ENCODE measurements at regions of chr3 and their contacts with region 1.

Region 1: GRCh38 chr3:148991194-148992026 is at the start of gene GYG1:
- DNase-seq: peak; percentile 56 to 78 (median 70)
- ATAC-seq: peak; percentile 91
- H3K4me3 ChIP-seq: peak within 1 kb of the TSS; percentile 77
- H3K4me3 Mint-ChIP-seq: peak within 1 kb of the TSS; percentile 70 to 91 (median 87)
- H3K27ac ChIP-seq: peak within 1 kb of the TSS; percentile 76
- H3K27ac Mint-ChIP-seq: peak within 1 kb of the TSS; percentile 41 to 87 (median 80)
- H3K4me1 ChIP-seq: peaks cover 8 to 16% of the 10 kb centered on the region in 2 donors
- H3K4me1 Mint-ChIP-seq: peaks cover 5 to 41% (median 28%) of the 10 kb centered on the region in 7 donors
- H3K27me3 ChIP-seq: no peaks in the 10 kb centered on the region
- H3K27me3 Mint-ChIP-seq: peaks cover 0 to 3% (median 0%) of the 10 kb centered on the region in 5 donors
- total RNA-seq, gene GYG1: 15.5 to 39.3 (median 16.2) TPM

Region 2: GRCh38 chr3:148930752-148931151 is 60.7 kb before region 1 on chr3:
- CTCF ChIA-PET with region 1: no interaction called
- POLR2A ChIA-PET with region 1: no interaction called
- intact Hi-C with region 1: no loop called
- DNase-seq: no peak
- ATAC-seq: no peak
- H3K4me3 ChIP-seq: no peak overlapping the region
- H3K4me3 Mint-ChIP-seq: no peak overlapping the region
- H3K27ac ChIP-seq: no peak overlapping the region
- H3K27ac Mint-ChIP-seq: no peak overlapping the region
- H3K4me1 ChIP-seq: no peaks in the 10 kb centered on the region
- H3K4me1 Mint-ChIP-seq: peaks cover 0 to 2% (median 0%) of the 10 kb centered on the region in 7 donors
- H3K27me3 ChIP-seq: no peaks in the 10 kb centered on the region
- H3K27me3 Mint-ChIP-seq: peaks cover 14 to 23% (median 19%) of the 10 kb centered on the region in 5 donors

Region 3: DNA sequence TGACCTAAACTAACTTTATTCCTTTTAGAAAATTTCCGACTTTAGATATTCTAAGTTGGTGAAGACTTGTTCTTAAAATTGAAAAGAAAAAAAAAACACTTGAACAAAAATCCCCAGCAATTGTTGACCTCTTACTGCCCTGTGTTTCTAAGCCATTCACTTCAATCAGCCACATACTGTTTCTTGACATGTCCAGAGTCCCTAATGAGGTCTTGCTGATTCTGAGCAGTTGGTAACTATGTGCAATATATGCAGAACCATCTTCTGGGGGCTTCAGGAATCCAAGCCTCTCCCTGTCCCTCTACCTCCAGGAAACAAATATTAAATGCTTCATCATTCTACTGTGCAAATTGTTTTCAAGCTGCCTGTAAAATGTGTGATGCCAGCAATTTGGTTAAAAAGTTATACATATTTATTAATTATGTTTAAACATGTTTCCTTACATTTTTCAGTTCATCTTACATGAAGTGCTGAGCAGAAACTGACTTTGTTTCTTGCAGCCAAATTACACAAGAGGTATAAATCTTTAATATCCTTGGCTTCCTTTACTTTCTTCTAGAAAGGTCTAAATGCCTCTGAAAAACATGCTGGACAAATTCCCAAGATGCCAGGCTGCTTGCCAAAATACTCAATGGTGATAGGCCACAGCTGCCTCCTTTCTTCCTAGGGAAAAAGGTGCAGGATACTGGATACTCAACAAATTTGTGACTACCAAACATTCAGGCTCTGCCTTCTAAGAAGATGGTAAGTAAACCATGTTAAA is 19.8 kb before region 1 on chr3:
- CTCF ChIA-PET with region 1: interaction called, 3 read pairs
- POLR2A ChIA-PET with region 1: no interaction called
- intact Hi-C with region 1: loop called in 1 of 2 experiments (anchors 1 kb)
- DNase-seq: no peak
- ATAC-seq: no peak
- H3K4me3 ChIP-seq: no peak overlapping the region
- H3K4me3 Mint-ChIP-seq: no peak overlapping the region
- H3K27ac ChIP-seq: no peak overlapping the region
- H3K27ac Mint-ChIP-seq: no peak overlapping the region
- H3K4me1 ChIP-seq: no peaks in the 10 kb centered on the region
- H3K4me1 Mint-ChIP-seq: peaks cover 0 to 4% (median 0%) of the 10 kb centered on the region in 7 donors
- H3K27me3 ChIP-seq: no peaks in the 10 kb centered on the region
- H3K27me3 Mint-ChIP-seq: peaks cover 0 to 8% (median 0%) of the 10 kb centered on the region in 5 donors

Region 4: GRCh38 chr3:149042789-149043386 is 51.5 kb after region 1 on chr3:
- CTCF ChIA-PET with region 1: no interaction called
- POLR2A ChIA-PET with region 1: no interaction called
- intact Hi-C with region 1: loop called in 1 of 2 experiments (anchors 5 kb)
- DNase-seq: no peak
- ATAC-seq: no peak
- H3K4me3 ChIP-seq: no peak overlapping the region
- H3K4me3 Mint-ChIP-seq: peak overlapping the region in 2 of 10 donors; percentile 15 to 54
- H3K27ac ChIP-seq: no peak overlapping the region
- H3K27ac Mint-ChIP-seq: peak overlapping the region in 6 of 9 donors; percentile 3 to 82 (median 50)
- H3K4me1 ChIP-seq: no peaks in the 10 kb centered on the region
- H3K4me1 Mint-ChIP-seq: peaks cover 3 to 25% (median 21%) of the 10 kb centered on the region in 7 donors
- H3K27me3 ChIP-seq: no peaks in the 10 kb centered on the region
- H3K27me3 Mint-ChIP-seq: no peaks in the 10 kb centered on the region

Region 5: GRCh38 chr3:149129326-149130205 is 138.2 kb after region 1 on chr3 and contains the start of gene HPS3:
- CTCF ChIA-PET with region 1: no interaction called
- POLR2A ChIA-PET with region 1: interaction called, 9 read pairs
- intact Hi-C with region 1: loop called (anchors 2 kb)
- DNase-seq: peak; percentile 62 to 87 (median 71)
- ATAC-seq: peak; percentile 94
- H3K4me3 ChIP-seq: peak within 1 kb of the TSS; percentile 96
- H3K4me3 Mint-ChIP-seq: peak within 1 kb of the TSS; percentile 92 to 99 (median 96)
- H3K27ac ChIP-seq: peak within 1 kb of the TSS; percentile 70
- H3K27ac Mint-ChIP-seq: peak within 1 kb of the TSS; percentile 84 to 96 (median 90)
- H3K4me1 ChIP-seq: peaks cover 25 to 27% of the 10 kb centered on the region in 2 donors
- H3K4me1 Mint-ChIP-seq: peaks cover 20 to 53% (median 47%) of the 10 kb centered on the region in 7 donors
- H3K27me3 ChIP-seq: no peaks in the 10 kb centered on the region
- H3K27me3 Mint-ChIP-seq: peaks cover 0 to 24% (median 8%) of the 10 kb centered on the region in 5 donors
- total RNA-seq, gene HPS3: 13.6 to 25.8 (median 23.4) TPM

Region 6: DNA sequence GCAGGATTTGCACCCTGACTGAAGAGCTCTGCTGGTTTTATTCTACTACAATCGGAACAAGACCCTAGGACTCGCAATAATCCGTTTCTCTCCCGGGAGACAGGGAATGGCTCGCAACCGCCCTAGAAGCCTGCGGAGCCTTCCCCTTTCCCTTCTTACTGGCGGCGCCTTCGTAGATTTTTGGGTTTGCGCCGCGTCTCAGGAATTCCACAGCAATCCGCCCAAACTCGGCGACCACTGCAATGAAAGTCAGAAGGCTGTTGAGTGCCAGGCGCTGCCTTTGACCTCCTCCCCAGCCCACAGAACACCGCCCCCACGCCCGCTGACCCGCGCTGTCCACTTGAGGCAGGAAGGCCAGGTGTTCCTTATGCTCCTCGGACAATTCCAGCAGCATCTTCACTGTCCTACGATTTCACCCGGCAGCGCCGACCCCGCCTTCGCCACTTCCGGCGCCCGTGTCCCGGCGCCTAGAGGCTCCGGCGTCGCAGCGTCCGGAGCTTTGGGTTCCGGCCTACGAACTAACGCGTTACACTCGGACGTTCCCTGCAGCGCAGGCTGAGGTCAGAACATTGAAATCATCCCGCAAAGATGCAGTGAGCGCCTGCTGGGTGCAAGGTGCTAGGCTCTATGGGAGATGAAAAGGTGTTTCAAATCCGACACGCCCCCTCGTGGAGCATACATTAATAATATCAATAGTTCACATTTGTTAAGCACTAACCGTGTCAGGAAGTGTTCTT is 760.8 kb after region 1 on chr3 and contains the start of gene COMMD2:
- CTCF ChIA-PET with region 1: no interaction called
- POLR2A ChIA-PET with region 1: no interaction called
- intact Hi-C with region 1: loop called in 1 of 2 experiments (anchors 5 kb)
- DNase-seq: peak; percentile 52 to 76 (median 63)
- ATAC-seq: peak; percentile 91
- H3K4me3 ChIP-seq: peak within 1 kb of the TSS; percentile 81
- H3K4me3 Mint-ChIP-seq: peak within 1 kb of the TSS; percentile 94 to 98 (median 96)
- H3K27ac ChIP-seq: peak within 1 kb of the TSS; percentile 73
- H3K27ac Mint-ChIP-seq: peak within 1 kb of the TSS; percentile 90 to 97 (median 96)
- H3K4me1 ChIP-seq: peaks cover 9 to 20% of the 10 kb centered on the region in 2 donors
- H3K4me1 Mint-ChIP-seq: peaks cover 12 to 56% (median 32%) of the 10 kb centered on the region in 7 donors
- H3K27me3 ChIP-seq: no peaks in the 10 kb centered on the region
- H3K27me3 Mint-ChIP-seq: peaks cover 0 to 2% (median 0%) of the 10 kb centered on the region in 5 donors
- total RNA-seq, gene COMMD2: 29.9 to 44.4 (median 33.4) TPM

Region 7: GRCh38 chr3:150703299-150704134 is 1712.1 kb after region 1 on chr3 and contains the start of gene ERICH6:
- CTCF ChIA-PET with region 1: no interaction called
- POLR2A ChIA-PET with region 1: no interaction called
- intact Hi-C with region 1: loop called in 1 of 2 experiments (anchors 5 kb)
- DNase-seq: peak; percentile 59 to 83 (median 71)
- ATAC-seq: peak; percentile 93
- H3K4me3 ChIP-seq: peak within 1 kb of the TSS; percentile 94
- H3K4me3 Mint-ChIP-seq: peak within 1 kb of the TSS; percentile 82 to 98 (median 97)
- H3K27ac ChIP-seq: peak within 1 kb of the TSS; percentile 84
- H3K27ac Mint-ChIP-seq: peak within 1 kb of the TSS; percentile 93 to 100 (median 97)
- H3K4me1 ChIP-seq: peaks cover 4 to 5% of the 10 kb centered on the region in 2 donors
- H3K4me1 Mint-ChIP-seq: peaks cover 11 to 24% (median 20%) of the 10 kb centered on the region in 7 donors
- H3K27me3 ChIP-seq: no peaks in the 10 kb centered on the region
- H3K27me3 Mint-ChIP-seq: peaks cover 0 to 6% (median 0%) of the 10 kb centered on the region in 5 donors
- total RNA-seq, gene ERICH6: 0.24 to 1.4 (median 0.53) TPM

Measured in naive thymus-derived CD4-positive, alpha-beta T cell (primary cell).